Mammary epithelial cell (primary cell): ENCODE measurements at regions of chr6 and their contacts with region 1.

Region 1: GRCh38 chr6:136582711-136583471 is 32.7 kb upstream of the MAP7 start:
- DNase-seq: peak; percentile 69
- H3K4me3 ChIP-seq: no peak overlapping the region
- H3K27ac ChIP-seq: peak overlapping the region; percentile 96
- H3K4me1 ChIP-seq: peaks cover 9% of the 10 kb centered on the region
- H3K27me3 ChIP-seq: no peaks in the 10 kb centered on the region
- CTCF ChIP-seq: peak; percentile 55

Region 2: DNA sequence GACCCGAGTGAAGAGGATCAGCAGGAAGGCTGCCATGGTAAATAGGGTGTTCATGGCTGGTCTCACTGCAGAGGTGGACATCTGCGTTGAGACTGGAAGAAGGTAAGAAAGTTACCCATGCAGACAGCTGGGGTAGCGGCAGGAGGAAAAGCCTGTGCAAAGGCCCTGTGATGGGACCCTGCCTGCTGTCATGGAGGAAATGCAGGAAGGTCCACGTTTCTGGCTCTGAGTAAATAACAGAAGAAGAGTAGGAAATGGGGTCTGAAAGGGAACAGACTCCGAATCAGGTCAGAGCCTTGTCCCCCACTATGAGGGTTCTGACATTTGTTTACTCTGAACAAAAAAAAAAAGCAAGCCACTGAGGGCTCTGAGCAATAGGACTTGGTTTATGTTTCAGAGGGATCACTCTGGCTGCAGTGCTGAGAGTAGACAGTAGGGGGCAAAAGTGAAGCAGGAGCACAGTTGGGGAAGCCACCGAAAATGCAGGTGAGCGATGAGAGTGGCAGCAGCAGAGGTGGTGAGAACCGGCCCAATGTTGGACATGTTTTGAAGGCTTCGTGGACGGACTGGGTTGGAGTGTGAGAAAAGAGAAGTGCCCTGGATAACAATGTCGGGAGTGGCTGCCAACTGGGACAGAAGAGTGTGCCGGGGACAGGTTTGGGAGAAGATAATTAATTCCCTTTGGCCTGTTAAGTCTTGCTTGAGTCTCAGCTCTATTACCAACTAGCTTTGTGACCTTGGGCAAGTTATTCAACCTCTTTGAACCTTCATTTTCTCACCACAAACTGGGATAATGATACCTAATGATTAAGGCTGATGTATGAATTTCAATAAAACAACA is 25.3 kb after region 1 on chr6:
- CTCF ChIA-PET with region 1: no interaction called
- dilution Hi-C with region 1: no loop called
- in situ Hi-C with region 1: no loop called
- intact Hi-C with region 1: loop called (anchors 1 kb)
- DNase-seq: peak; percentile 76
- H3K4me3 ChIP-seq: no peak overlapping the region
- H3K27ac ChIP-seq: peak overlapping the region; percentile 35
- H3K4me1 ChIP-seq: peaks cover 35% of the 10 kb centered on the region
- H3K27me3 ChIP-seq: no peaks in the 10 kb centered on the region
- CTCF ChIP-seq: peak; percentile 94 to 97

Region 3: GRCh38 chr6:136643850-136644596 is 61.1 kb after region 1 on chr6:
- CTCF ChIA-PET with region 1: no interaction called
- dilution Hi-C with region 1: loop called (anchors 5 kb)
- in situ Hi-C with region 1: no loop called
- intact Hi-C with region 1: loop called (anchors 1 kb)
- DNase-seq: peak; percentile 80
- H3K4me3 ChIP-seq: no peak overlapping the region
- H3K27ac ChIP-seq: no peak overlapping the region
- H3K4me1 ChIP-seq: peaks cover 7% of the 10 kb centered on the region
- H3K27me3 ChIP-seq: no peaks in the 10 kb centered on the region
- CTCF ChIP-seq: peak; percentile 96 to 97

Region 4: GRCh38 chr6:136822376-136823127 is 239.7 kb after region 1 on chr6 and contains the start of gene PEX7:
- CTCF ChIA-PET with region 1: no interaction called
- dilution Hi-C with region 1: no loop called
- in situ Hi-C with region 1: no loop called
- intact Hi-C with region 1: loop called (anchors 1 kb)
- DNase-seq: peak; percentile 91
- H3K4me3 ChIP-seq: peak within 1 kb of the TSS; percentile 62 to 83 (median 74)
- H3K27ac ChIP-seq: peak within 1 kb of the TSS; percentile 85
- H3K4me1 ChIP-seq: peaks cover 6% of the 10 kb centered on the region
- H3K27me3 ChIP-seq: no peaks in the 10 kb centered on the region
- CTCF ChIP-seq: peak; percentile 46 to 64
- total RNA-seq, gene PEX7: 9.0 to 13.8 TPM

Region 5: DNA sequence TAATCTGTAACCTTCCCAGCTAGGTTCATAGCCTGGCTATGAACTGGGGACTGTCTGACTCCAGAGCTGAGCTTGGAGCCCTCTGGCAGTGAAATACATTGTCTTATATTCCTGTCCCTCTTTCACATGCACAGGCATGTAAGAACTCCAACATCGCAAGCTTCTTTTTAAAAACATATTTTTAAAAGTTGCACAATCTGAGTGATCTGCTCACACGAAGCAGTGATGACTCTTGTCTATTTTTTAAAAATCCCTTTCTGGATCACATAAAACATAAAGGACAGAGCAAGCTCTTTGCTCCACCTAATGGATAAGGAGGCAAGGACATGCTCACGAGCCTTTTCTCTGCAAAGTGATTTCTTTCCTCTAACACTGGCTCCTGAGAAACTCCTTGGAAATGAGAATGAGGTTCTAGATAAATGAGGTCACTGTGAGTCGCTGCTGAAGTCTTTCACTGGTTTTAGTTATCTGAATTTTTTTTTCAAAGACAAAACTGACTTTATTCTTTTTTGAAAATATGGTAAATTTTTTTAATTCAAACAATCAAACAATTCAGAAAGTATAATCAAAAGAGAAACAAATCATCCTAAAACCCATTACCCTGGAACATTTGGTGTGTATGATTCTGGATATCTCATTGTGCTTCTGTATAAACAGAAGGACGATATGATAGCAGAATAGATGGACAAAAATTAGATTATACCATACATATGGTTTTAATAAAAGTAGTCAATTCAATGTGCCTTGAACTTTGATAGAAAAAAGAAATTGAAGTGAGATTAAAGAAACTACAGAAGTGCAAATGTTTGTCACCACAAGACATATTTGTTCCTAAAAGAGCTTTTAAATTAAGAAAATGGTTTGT is 431.1 kb after region 1 on chr6:
- CTCF ChIA-PET with region 1: no interaction called
- dilution Hi-C with region 1: no loop called
- in situ Hi-C with region 1: no loop called
- intact Hi-C with region 1: loop called (anchors 1 kb)
- DNase-seq: peak; percentile 71
- H3K4me3 ChIP-seq: no peak overlapping the region
- H3K27ac ChIP-seq: no peak overlapping the region
- H3K4me1 ChIP-seq: peaks cover 13% of the 10 kb centered on the region
- H3K27me3 ChIP-seq: peaks cover 4% of the 10 kb centered on the region
- CTCF ChIP-seq: peak; percentile 66 to 85